Breast epithelium (tissue), 4 donors: ENCODE measurements at regions of chr7 and their contacts with region 1.

Region 1: DNA sequence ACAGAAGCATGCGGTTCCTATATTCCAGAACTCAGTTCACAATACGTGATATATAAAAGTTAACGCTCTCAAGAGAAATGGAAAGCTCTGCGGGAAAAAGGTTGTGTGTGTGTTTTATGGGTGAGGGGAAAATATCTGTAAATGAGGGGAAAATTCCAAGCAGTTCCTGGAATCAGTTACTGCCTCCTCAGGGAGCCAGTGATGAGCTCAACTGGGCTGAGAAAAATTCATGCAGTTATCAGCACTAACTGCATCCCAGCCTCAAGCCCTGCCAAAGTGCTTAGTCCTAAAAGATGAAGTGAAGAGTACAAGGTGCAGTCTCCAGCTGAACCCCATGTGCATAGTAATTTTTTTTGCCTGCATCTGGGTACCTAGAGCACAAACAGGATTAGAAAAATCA is 191.9 kb downstream of the CDK14 start:
- DNase-seq: no peak
- H3K4me3 ChIP-seq: no peak overlapping the region
- H3K27ac ChIP-seq: no peak overlapping the region
- H3K4me1 ChIP-seq: no peaks in the 10 kb centered on the region
- H3K27me3 ChIP-seq: no peaks in the 10 kb centered on the region
- CTCF ChIP-seq: no peak
- POLR2A ChIP-seq: no peak

Region 2: DNA sequence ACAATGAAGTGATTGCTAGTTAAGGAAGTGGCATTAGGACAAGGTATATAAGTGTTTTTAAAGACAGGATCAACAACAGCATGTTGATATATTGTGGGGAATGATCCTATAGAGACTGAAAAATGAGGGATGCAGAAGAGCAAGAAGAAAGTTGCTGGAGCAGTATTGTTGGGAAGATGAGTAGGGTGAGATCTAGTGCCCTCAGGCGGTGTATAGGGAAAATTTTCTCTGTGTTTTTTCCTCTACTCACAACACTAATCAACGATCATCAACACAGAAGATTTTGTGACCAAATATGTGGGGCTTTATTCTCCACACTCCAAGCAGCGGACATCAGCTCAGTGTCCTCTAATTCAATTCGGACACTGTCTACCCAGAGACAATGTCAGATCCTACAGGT is 328.2 kb before region 1 on chr7:
- intact Hi-C with region 1: loop called (anchors 5 kb)
- DNase-seq: no peak
- H3K4me3 ChIP-seq: no peak overlapping the region
- H3K27ac ChIP-seq: no peak overlapping the region
- H3K4me1 ChIP-seq: no peaks in the 10 kb centered on the region
- H3K27me3 ChIP-seq: no peaks in the 10 kb centered on the region
- CTCF ChIP-seq: no peak
- POLR2A ChIP-seq: no peak

Region 3: DNA sequence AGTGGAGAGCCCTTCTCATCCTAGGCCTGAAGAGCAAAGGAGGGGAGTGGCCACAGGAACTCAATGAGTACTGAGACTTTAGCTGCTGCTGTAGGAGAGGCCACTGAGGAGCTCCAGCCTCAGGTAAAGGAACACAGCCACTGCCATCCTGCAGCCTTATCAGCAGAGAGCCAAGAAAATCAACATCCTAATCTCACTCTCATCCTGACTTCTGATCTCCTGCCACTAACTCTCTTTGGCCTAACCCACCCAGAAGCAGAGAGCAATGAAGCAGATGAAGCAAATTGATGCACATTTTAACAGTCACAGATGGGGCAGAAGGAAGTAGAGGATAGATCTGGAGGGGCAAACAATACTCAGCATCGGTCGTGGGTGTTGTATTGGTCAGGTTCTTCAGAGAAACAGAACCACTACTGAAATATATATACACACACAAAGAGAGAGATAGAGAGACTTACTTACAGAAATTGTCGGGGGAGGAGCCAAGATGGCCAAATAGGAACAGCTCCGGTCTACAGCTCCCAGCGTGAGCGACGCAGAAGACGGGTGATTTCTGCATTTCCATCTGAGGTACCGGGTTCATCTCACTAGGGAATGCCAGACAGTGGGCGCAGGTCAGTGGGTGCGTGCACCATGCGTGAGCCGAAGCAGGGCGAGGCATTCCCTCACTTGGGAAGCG is 794.9 kb after region 1 on chr7:
- intact Hi-C with region 1: no loop called
- DNase-seq: no peak
- H3K4me3 ChIP-seq: no peak overlapping the region
- H3K27ac ChIP-seq: no peak overlapping the region
- H3K4me1 ChIP-seq: no peaks in the 10 kb centered on the region
- H3K27me3 ChIP-seq: no peaks in the 10 kb centered on the region
- CTCF ChIP-seq: no peak
- POLR2A ChIP-seq: no peak